ENCODE measurements at regions of chr1 and their contacts with region 1.

Region 1: DNA sequence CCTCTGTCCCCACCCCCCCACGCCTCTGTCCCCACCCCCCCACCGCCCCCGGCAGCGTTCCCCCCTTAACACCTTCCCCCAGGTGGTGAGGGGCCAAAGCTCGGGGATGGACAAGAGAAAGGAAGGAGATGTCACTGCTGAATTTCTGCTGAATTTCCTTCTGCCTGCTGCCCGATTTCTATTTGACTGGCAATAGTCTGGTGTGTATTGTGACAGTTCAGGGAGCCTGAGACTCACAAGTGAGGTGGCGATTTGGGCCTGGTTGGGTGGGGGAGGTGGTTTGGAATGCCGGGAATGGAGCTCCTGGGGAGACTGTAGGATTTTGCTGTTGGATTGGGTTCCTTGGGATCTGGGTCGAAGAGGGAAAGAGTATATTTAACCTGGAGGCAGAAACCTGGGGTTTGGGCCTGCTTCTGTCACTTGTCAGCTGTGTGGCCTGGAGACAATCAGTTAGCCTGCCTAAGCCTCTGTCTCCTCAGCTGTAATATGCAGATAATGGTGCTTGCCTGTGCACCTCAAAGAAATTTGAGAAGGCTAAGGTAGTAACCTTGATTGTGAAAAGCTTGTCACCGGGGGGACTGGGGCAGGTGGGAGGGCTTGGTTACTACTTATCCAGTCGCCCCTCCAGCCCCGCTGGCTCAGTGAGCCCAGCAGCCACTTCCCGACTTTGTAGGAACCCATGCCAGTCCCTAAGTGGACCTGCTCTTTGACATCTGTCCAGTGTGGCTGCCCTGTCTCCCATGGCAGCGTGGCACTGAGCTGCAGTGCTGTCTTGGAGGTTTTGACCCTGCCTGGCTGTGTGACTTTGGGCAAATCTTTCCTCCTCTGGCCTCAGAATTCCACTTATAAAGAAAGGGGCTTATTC is 7.7 kb upstream of the LMNA start:
- DNase-seq: no peak
- ATAC-seq: peak; percentile 20

Region 2: GRCh38 chr1:156123356-156124196 is 16.7 kb after region 1 on chr1:
- intact Hi-C with region 1: loop called (anchors 1 kb)
- DNase-seq: peak; percentile 98
- ATAC-seq: peak; percentile 81

Measured in Right ventricle myocardium inferior (tissue), 1 donor.